Activated CD4-positive, alpha-beta T cell treated with anti-CD3 and anti-CD28 coated beads for 36 hours (primary cell): ENCODE measurements at regions of chr11 and their contacts with region 1.

Region 1: GRCh38 chr11:121464352-121464946 is 11.7 kb upstream of the SORL1-AS1 start:
- DNase-seq: peak; percentile 94
- ATAC-seq: peak; percentile 82
- H3K4me3 Mint-ChIP-seq: peak overlapping the region; percentile 61
- H3K27ac Mint-ChIP-seq: peak overlapping the region; percentile 96
- H3K4me1 Mint-ChIP-seq: peaks cover 98% of the 10 kb centered on the region
- H3K27me3 Mint-ChIP-seq: no peaks in the 10 kb centered on the region

Region 2: DNA sequence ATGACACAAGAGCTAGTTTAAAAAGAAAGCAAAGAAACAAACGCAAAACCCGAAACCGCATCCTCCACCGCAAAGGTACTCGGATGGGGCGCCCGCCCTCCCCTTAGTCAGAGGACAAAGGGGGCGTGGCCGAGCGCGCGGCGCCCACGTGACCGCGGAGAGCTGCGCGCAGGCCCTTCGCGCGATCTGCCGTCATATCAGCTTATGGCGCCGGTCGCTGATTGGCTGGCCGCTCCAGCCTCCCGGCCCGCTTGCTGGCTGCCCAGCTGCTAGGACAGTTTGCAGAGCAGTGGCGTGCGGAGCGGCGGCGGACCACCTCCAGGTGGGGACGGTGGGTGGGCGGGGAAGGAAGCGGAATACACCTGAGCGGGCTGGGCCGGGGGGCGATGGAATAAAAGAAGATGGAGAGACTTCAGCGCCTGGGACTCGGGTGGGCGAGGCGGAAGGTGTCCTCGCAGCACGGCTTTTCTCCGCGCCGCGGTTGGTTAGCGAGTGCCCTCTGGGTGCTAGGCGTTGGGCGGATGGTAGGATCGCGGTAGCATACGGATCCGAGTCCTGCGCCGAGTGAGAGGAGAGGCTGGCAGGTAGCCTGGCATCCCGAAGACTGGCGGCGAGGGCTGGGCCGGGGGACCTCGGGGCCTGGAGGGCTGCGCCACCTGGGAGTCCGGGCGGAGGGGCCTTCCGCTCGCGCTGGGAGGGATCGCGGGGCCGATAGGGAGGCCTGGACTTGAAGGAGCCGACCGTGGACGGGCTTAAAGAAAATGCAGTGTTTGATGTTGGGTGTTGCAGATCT is 171.8 kb before region 1 on chr11 and contains the start of gene SC5D:
- CTCF ChIA-PET with region 1: no interaction called
- POLR2A ChIA-PET with region 1: interaction called, 6 read pairs
- intact Hi-C with region 1: loop called in 1 of 2 experiments (anchors 1 kb)
- DNase-seq: peak; percentile 97
- ATAC-seq: peak; percentile 95
- H3K4me3 Mint-ChIP-seq: peak within 1 kb of the TSS; percentile 81
- H3K27ac Mint-ChIP-seq: peak within 1 kb of the TSS; percentile 91
- H3K4me1 Mint-ChIP-seq: peaks cover 36% of the 10 kb centered on the region
- H3K27me3 Mint-ChIP-seq: no peaks in the 10 kb centered on the region
- total RNA-seq, gene SC5D: 22.3 to 29.9 TPM

Region 3: DNA sequence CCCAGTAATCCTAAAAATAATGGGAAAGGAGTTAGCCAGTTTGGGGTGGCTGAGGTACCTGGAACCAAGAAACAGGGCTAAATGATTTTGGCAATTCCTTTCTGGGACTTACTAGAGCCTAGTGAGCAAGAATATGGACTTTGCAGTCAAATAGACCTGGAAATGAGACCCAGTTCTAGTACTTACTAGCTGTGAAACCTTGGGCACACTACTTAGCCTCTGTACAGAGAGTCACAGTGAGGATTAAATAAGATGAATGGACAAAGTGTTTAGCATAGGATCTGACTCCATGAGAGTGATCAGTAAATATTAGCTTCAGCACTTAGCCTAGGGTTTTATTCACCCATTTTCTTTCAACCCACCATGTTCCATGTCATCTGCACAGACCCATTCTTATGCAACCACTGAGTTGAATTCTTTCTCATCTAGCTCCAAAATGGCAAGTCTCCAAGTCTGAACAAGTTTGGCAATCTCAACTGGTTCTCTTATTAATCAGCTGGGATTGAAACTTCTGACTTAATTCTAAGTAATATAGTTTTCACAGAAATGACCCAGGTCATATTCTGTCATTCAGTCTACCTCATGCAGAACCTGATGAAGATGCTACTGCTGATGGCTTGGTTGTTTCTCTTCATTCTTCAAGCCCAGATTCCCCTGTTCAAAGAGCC is 27.3 kb before region 1 on chr11:
- CTCF ChIA-PET with region 1: interaction called, 5 read pairs
- POLR2A ChIA-PET with region 1: interaction called, 12 read pairs
- intact Hi-C with region 1: loop called (anchors 1 kb)
- DNase-seq: no peak
- ATAC-seq: peak; percentile 81
- H3K4me3 Mint-ChIP-seq: no peak overlapping the region
- H3K27ac Mint-ChIP-seq: peak overlapping the region; percentile 61
- H3K4me1 Mint-ChIP-seq: peaks cover 49% of the 10 kb centered on the region
- H3K27me3 Mint-ChIP-seq: no peaks in the 10 kb centered on the region

Region 4: GRCh38 chr11:121482231-121483129 is 18.0 kb after region 1 on chr11:
- CTCF ChIA-PET with region 1: interaction called, 12 read pairs
- POLR2A ChIA-PET with region 1: interaction called, 5 read pairs
- intact Hi-C with region 1: loop called (anchors 1 kb)
- DNase-seq: peak; percentile 65
- ATAC-seq: peak; percentile 82
- H3K4me3 Mint-ChIP-seq: peak overlapping the region; percentile 70
- H3K27ac Mint-ChIP-seq: peak overlapping the region; percentile 96
- H3K4me1 Mint-ChIP-seq: peaks cover 51% of the 10 kb centered on the region
- H3K27me3 Mint-ChIP-seq: no peaks in the 10 kb centered on the region

Region 5: DNA sequence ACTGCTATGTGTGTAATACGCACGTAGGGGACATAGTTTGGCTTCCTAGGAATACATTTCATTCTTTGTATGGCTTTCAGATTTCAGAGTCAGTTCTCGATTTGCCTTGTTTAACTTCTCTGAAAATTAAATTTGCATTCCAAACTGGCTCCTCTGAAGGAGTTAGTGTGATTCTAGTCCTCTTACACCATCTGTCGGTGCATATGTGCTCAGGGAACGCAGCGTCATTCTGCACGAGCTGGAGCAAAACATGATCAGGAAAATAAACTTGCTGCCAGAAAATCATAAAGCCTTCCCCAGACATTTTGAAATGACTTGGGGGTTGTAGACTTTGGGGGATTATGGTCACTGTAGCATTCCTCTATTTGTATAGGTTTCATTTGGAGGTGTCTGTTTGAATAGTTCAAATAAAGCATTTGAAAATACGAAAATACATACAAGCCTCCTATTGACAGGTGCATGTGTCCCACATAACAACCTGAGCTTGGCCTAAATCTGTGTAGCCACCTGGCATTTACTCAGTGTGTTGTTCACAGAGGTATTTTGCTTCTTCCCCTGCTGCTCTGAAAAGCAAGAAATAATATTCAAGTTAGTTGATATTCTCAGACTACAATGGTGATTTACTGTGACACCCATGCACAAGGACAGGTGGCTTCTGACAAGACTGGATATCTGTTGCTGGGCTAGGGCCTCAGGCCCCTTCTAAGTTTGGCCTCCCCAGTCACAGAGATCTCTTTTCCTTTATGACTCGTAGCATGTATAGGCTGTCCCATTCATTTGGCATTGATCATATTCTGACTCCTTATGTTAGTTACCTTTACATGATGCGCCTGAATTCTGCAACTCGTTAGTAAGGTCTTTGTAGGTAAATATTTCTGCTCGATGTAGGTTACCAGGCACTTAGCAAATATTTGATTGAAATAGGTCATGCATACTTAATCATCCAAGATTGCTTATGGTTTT is 70.0 kb after region 1 on chr11:
- CTCF ChIA-PET with region 1: no interaction called
- POLR2A ChIA-PET with region 1: no interaction called
- intact Hi-C with region 1: loop called in 1 of 2 experiments (anchors 5 kb)
- DNase-seq: no peak
- ATAC-seq: no peak
- H3K4me3 Mint-ChIP-seq: no peak overlapping the region
- H3K27ac Mint-ChIP-seq: no peak overlapping the region
- H3K4me1 Mint-ChIP-seq: peaks cover 48% of the 10 kb centered on the region
- H3K27me3 Mint-ChIP-seq: no peaks in the 10 kb centered on the region

Region 6: DNA sequence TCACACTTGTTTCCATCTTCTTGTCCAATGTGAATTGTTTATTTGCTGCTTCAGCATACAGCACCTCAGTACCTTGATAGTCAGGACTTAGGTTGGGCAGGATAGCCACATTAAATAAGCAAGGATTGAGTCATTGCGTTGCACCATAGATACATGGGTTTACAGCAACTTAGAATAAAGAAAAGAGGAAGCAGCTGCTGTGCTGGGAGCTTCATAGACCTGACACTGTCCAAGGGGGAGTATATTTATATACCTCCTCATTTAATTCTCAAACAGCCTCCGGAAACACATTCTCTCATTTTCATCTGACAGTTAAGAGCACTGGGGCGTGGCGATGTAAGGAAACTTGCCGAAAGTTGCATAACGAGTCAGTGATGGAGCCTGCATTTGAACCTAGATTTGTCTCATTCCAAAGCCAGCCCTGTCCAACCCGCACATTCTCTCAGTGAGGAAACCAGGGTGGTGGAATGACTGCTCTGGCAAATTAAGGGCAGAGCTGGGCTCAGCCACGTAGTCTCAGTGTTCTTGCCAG is 1233.3 kb after region 1 on chr11:
- CTCF ChIA-PET with region 1: no interaction called
- POLR2A ChIA-PET with region 1: no interaction called
- intact Hi-C with region 1: loop called in 1 of 2 experiments (anchors 5 kb)
- DNase-seq: peak; percentile 61
- ATAC-seq: peak; percentile 79
- H3K4me3 Mint-ChIP-seq: peak overlapping the region; percentile 17
- H3K27ac Mint-ChIP-seq: peak overlapping the region; percentile 82
- H3K4me1 Mint-ChIP-seq: peaks cover 82% of the 10 kb centered on the region
- H3K27me3 Mint-ChIP-seq: no peaks in the 10 kb centered on the region

Region 7: GRCh38 chr11:123062158-123062891 is 1597.9 kb after region 1 on chr11:
- CTCF ChIA-PET with region 1: no interaction called
- POLR2A ChIA-PET with region 1: interaction called, 11 read pairs
- intact Hi-C with region 1: loop called in 1 of 2 experiments (anchors 10 kb)
- DNase-seq: peak; percentile 100
- ATAC-seq: peak; percentile 89
- H3K4me3 Mint-ChIP-seq: peak overlapping the region; percentile 99
- H3K27ac Mint-ChIP-seq: peak overlapping the region; percentile 99
- H3K4me1 Mint-ChIP-seq: peaks cover 37% of the 10 kb centered on the region
- H3K27me3 Mint-ChIP-seq: no peaks in the 10 kb centered on the region